Activated CD4-positive, alpha-beta T cell treated with anti-CD3 and anti-CD28 coated beads, Interleukin-2, amount 10 ng/mL, durations not matched to agents 24 days and 14 days (primary cell): ENCODE measurements at regions of chr19 and their contacts with region 1.

Region 1: DNA sequence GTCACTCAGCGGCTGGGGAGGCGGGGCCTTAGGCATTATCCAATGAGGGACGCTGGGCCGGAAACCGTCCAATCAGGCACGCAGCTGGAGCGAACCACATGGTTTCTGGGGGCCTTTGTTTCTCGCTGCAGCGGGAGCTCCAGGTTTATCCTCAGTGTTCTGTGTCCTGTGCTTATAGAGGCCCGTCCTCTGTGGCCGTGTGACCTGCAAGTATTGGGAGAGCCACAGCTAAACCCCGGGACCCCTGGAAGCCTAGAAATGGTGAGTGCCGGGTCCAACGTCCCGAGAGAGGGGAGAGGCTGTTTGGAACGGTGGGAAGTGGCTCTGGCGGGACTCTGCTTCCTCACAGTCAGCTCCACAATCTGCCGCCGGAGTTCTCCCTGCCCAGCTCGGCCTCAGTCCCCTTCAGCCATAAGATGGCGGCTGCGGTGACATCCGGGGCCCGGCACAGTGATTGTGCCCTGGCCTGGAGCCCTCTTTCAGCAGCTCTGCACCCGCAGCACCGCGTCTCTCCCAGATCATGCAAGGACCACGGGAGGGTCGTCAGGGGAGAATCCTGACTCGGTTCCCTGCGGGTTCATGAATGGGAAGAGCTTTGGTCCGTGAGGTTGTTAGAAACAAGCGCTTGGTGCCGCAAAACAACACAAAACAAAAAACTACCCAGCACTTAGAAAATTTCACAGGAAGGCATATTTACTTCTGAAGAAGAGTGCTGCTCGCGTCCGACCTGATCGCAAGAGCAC is at the start of gene ZNF253:
- DNase-seq: peak; percentile 97
- H3K4me3 Mint-ChIP-seq: peak within 1 kb of the TSS; percentile 100
- H3K27ac Mint-ChIP-seq: peak within 1 kb of the TSS; percentile 100
- H3K4me1 Mint-ChIP-seq: peaks cover 22% of the 10 kb centered on the region
- H3K27me3 Mint-ChIP-seq: no peaks in the 10 kb centered on the region
- total RNA-seq, gene ZNF253: 8.0 and 9.4 TPM in 2 replicates

Region 2: GRCh38 chr19:19597809-19598306 is 268.1 kb before region 1 on chr19:
- intact Hi-C with region 1: loop called (anchors 5 kb)
- DNase-seq: peak; percentile 91
- H3K4me3 Mint-ChIP-seq: peak overlapping the region; percentile 82
- H3K27ac Mint-ChIP-seq: peak overlapping the region; percentile 96
- H3K4me1 Mint-ChIP-seq: peaks cover 61% of the 10 kb centered on the region
- H3K27me3 Mint-ChIP-seq: no peaks in the 10 kb centered on the region

Region 3: DNA sequence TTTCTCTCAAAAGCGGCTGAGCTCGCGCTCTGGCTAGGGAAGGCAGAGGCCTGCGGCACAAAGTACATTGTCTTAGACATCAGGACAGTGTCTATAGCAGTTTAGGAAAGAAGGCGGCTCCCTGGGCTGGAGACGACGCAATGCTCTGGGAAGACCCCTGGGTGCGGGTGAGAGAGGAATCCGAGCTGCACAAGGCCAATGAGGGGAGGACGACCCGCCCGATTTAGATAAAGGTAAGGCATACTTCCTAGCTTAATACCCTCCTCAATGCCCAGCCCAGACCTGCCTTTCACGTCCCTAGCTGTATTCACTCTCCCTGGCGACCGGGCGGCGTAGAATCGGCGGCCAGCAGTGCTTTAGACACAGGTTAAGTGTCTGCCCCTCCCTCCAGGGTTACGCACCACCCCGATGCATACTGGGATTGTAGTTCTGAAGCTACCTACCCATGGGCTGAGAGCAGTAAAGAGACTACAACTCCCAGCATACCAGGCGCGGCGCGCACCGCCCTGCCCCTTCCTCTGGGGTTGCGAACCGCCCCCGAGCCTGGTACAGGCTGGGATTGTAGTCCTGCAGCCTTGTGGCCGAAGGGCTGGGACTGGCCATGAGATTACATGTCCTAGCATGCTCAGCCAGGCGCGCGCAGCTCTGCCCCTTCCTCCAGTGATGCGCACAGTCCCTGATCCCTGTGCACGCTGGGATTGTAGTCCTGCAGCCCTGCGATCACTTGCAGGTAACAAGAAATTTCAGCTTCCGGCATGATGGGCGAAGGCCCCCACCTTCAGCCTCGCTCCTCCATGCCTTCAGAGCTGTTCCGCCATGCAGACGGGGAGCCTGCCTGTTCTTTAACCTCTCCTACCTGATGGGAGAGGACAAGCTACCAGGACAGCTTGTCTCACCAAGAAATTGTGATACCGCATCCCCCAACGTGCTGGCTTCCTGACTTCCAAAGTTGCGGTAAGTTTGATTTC is 89.6 kb before region 1 on chr19:
- intact Hi-C with region 1: loop called (anchors 1 kb)
- DNase-seq: peak; percentile 98
- H3K4me3 Mint-ChIP-seq: peak overlapping the region; percentile 93
- H3K27ac Mint-ChIP-seq: peak overlapping the region; percentile 85
- H3K4me1 Mint-ChIP-seq: peaks cover 24% of the 10 kb centered on the region
- H3K27me3 Mint-ChIP-seq: no peaks in the 10 kb centered on the region

Region 4: GRCh38 chr19:19805480-19805879 is 60.4 kb before region 1 on chr19:
- intact Hi-C with region 1: no loop called
- DNase-seq: no peak
- H3K4me3 Mint-ChIP-seq: no peak overlapping the region
- H3K27ac Mint-ChIP-seq: no peak overlapping the region
- H3K4me1 Mint-ChIP-seq: no peaks in the 10 kb centered on the region
- H3K27me3 Mint-ChIP-seq: no peaks in the 10 kb centered on the region

Region 5: GRCh38 chr19:19821366-19821951 is 44.5 kb before region 1 on chr19 and contains the start of gene ZNF506:
- intact Hi-C with region 1: loop called (anchors 1 kb)
- DNase-seq: peak; percentile 97
- H3K4me3 Mint-ChIP-seq: peak within 1 kb of the TSS; percentile 98
- H3K27ac Mint-ChIP-seq: peak within 1 kb of the TSS; percentile 99
- H3K4me1 Mint-ChIP-seq: peaks cover 12% of the 10 kb centered on the region
- H3K27me3 Mint-ChIP-seq: no peaks in the 10 kb centered on the region
- total RNA-seq, gene ZNF506: 13.3 and 16.2 TPM in 2 replicates

Region 6: GRCh38 chr19:19900729-19901444 is 35.0 kb after region 1 on chr19 and contains the start of gene ZNF93:
- intact Hi-C with region 1: loop called (anchors 1 kb)
- DNase-seq: peak; percentile 96
- H3K4me3 Mint-ChIP-seq: peak within 1 kb of the TSS; percentile 96
- H3K27ac Mint-ChIP-seq: peak within 1 kb of the TSS; percentile 97
- H3K4me1 Mint-ChIP-seq: peaks cover 12% of the 10 kb centered on the region
- H3K27me3 Mint-ChIP-seq: no peaks in the 10 kb centered on the region
- total RNA-seq, gene ZNF93: 7.2 and 8.3 TPM in 2 replicates

Region 7: DNA sequence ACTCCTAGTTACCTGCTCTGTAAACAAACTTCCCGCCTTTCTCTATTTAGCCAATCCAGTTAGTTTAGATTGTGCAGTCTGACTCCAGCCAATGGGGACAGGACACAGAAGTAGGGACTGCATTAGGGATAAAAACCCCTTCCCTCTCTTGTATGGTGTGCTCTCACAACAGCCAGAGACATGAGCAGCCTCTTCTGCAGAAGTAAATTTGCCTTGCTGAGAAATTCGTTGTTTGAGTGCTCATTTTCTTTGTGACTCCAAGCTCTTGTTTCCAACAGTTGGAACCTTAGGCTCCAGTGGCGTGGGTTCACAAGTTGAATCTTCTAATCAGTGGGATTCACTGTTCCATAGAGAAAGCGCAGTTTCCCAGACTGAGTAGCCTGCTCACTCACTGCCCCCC is 101.0 kb after region 1 on chr19:
- intact Hi-C with region 1: no loop called
- DNase-seq: no peak
- H3K4me3 Mint-ChIP-seq: no peak overlapping the region
- H3K27ac Mint-ChIP-seq: no peak overlapping the region
- H3K4me1 Mint-ChIP-seq: no peaks in the 10 kb centered on the region
- H3K27me3 Mint-ChIP-seq: no peaks in the 10 kb centered on the region

Region 8: GRCh38 chr19:20039203-20039723 is 173.4 kb after region 1 on chr19 and contains the start of gene ZNF682:
- intact Hi-C with region 1: loop called (anchors 2 kb)
- DNase-seq: peak; percentile 96
- H3K4me3 Mint-ChIP-seq: peak within 1 kb of the TSS; percentile 95
- H3K27ac Mint-ChIP-seq: peak within 1 kb of the TSS; percentile 92
- H3K4me1 Mint-ChIP-seq: peaks cover 14% of the 10 kb centered on the region
- H3K27me3 Mint-ChIP-seq: no peaks in the 10 kb centered on the region
- total RNA-seq, gene ZNF682: 4.7 and 6.5 TPM in 2 replicates